Activated CD8-positive, alpha-beta T cell treated with anti-CD3 and anti-CD28 coated beads, Interleukin-2, amount 10 ng/mL, durations not matched to agents 7 days and 5 days (primary cell): ENCODE measurements at regions of chr7 and their contacts with region 1.

Region 1: GRCh38 chr7:129825496-129826267 is 127.1 kb downstream of the UBE2H start:
- DNase-seq: peak; percentile 92
- ATAC-seq: peak; percentile 85
- H3K4me3 Mint-ChIP-seq: peak overlapping the region; percentile 89
- H3K27ac Mint-ChIP-seq: peak overlapping the region; percentile 89
- H3K4me1 Mint-ChIP-seq: peaks cover 26% of the 10 kb centered on the region
- H3K27me3 Mint-ChIP-seq: no peaks in the 10 kb centered on the region

Region 2: GRCh38 chr7:129343099-129343700 is 482.5 kb before region 1 on chr7:
- CTCF ChIA-PET with region 1: interaction called, 12 read pairs
- POLR2A ChIA-PET with region 1: no interaction called
- DNase-seq: peak; percentile 44
- ATAC-seq: peak; percentile 52
- H3K4me3 Mint-ChIP-seq: no peak overlapping the region
- H3K27ac Mint-ChIP-seq: no peak overlapping the region
- H3K4me1 Mint-ChIP-seq: peaks cover 41% of the 10 kb centered on the region
- H3K27me3 Mint-ChIP-seq: no peaks in the 10 kb centered on the region

Region 3: GRCh38 chr7:129664029-129665012 is 161.4 kb before region 1 on chr7:
- CTCF ChIA-PET with region 1: interaction called, 14 read pairs
- POLR2A ChIA-PET with region 1: no interaction called
- DNase-seq: peak; percentile 23
- ATAC-seq: peak; percentile 51
- H3K4me3 Mint-ChIP-seq: no peak overlapping the region
- H3K27ac Mint-ChIP-seq: no peak overlapping the region
- H3K4me1 Mint-ChIP-seq: peaks cover 3% of the 10 kb centered on the region
- H3K27me3 Mint-ChIP-seq: no peaks in the 10 kb centered on the region

Region 4: DNA sequence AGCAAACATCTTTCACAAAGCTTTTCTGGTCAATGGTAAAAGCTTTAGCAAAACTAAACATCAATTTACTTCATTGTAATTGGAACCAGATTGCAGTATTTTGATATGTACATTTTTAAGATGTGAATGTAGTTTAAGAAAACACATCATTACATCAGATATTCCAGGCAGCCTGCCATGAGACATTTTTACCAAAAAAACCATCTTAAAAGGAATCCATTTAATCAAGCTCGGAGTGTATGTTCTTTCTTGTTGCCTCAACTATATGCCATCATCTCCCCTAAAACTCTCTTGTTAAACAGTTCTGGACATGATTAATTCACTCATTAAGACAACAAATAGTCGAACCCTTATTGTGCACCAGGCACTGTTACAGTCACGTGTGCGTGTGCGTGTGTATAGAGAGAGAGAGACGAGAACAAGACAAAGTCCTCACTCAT is 29.6 kb after region 1 on chr7:
- CTCF ChIA-PET with region 1: interaction called, 15 read pairs
- POLR2A ChIA-PET with region 1: no interaction called
- DNase-seq: no peak
- ATAC-seq: no peak
- H3K4me3 Mint-ChIP-seq: no peak overlapping the region
- H3K27ac Mint-ChIP-seq: no peak overlapping the region
- H3K4me1 Mint-ChIP-seq: peaks cover 38% of the 10 kb centered on the region
- H3K27me3 Mint-ChIP-seq: no peaks in the 10 kb centered on the region

Region 5: DNA sequence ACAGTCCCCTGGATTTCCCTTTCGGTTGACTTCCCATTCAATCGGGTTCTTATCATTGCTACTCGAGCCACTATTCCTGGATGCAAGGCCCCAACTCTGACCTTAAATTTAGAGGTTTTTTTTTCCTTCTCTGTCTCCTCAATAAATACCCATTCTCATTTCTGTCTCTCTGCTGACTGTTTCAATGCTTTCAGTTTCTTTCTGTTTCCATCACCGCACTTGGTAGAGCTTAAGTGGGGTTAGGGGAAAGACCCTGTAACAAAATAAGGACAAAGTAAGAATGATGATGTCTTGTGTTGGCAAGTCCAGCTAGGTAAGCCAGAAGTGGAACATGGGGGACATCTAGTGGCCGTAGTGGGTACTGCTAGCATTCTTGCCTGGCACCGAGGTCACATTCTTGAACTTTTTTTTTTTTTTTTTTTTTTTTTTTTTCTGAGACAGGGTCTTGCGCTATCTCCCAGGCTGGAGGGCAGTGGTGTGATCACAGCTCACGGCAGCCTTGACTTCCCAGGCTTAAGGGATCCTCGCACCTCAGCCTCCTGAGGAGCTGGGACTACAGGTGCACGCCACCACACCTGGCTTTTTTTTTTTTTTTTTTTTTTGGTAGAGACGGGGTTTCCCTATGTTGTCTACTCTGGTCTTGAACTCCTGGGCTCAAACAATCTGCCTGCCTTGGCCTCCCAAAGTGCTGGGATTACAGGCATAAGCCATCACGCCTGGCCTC is 185.2 kb after region 1 on chr7:
- CTCF ChIA-PET with region 1: interaction called, 61 read pairs
- POLR2A ChIA-PET with region 1: no interaction called
- DNase-seq: peak; percentile 91
- ATAC-seq: peak; percentile 70
- H3K4me3 Mint-ChIP-seq: no peak overlapping the region
- H3K27ac Mint-ChIP-seq: peak overlapping the region; percentile 7
- H3K4me1 Mint-ChIP-seq: peaks cover 6% of the 10 kb centered on the region
- H3K27me3 Mint-ChIP-seq: no peaks in the 10 kb centered on the region

Region 6: DNA sequence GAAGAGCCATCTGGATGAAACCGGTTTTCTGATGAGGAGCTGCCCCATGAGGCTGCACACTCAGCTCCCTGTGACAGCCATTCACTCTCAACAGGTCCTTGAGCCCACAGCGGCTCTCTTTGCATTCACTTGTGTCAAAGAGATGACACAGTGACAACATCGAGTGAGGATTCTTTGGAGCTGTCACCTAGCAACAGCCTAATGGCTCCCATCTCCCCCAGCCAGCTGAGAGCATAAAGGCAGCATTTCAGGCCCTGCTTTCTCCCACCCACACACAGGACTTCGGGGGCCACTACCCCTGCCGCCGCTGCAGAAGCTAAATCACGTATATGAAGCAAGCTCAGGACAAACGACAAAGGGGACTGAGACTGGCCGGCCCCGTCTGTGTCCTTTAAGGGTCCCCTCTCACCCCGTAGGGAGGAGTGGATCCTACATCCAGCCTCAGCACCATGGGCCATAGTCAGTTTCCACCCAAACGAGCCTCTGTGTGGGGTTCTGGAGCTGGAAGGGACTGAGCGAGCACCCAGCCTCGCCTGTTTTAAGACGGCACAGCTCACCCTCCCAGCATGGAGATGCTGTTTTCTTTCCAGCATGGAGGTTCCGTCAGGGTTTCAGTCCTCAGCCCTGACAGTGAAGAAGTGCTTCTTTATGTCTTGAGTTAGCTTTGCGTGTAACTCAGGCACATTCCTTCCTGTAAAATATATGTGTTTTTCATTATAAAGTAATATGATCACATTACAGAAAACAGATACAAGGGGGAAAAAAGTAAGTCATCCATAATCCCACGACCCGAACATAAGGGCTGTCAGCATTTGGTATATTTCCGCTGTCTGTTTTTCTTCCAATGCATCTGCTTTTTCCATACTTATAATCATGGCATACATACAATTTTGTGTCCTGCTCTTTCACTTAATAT is 472.2 kb after region 1 on chr7:
- CTCF ChIA-PET with region 1: no interaction called
- POLR2A ChIA-PET with region 1: no interaction called
- DNase-seq: no peak
- ATAC-seq: no peak
- H3K4me3 Mint-ChIP-seq: no peak overlapping the region
- H3K27ac Mint-ChIP-seq: no peak overlapping the region
- H3K4me1 Mint-ChIP-seq: no peaks in the 10 kb centered on the region
- H3K27me3 Mint-ChIP-seq: peaks cover 4% of the 10 kb centered on the region